Mammary epithelial cell (primary cell): ENCODE measurements at regions of chr1 and their contacts with region 1.

Region 1: GRCh38 chr1:37802439-37802838 is 5.2 kb upstream of the C1orf122 start:
- DNase-seq: no peak
- H3K4me3 ChIP-seq: no peak overlapping the region
- H3K27ac ChIP-seq: no peak overlapping the region
- H3K4me1 ChIP-seq: peaks cover 6% of the 10 kb centered on the region
- H3K27me3 ChIP-seq: no peaks in the 10 kb centered on the region
- CTCF ChIP-seq: no peak

Region 2: GRCh38 chr1:37859507-37860345 is 57.3 kb after region 1 on chr1 and contains the start of gene MTF1:
- CTCF ChIA-PET with region 1: no interaction called
- dilution Hi-C with region 1: loop called (anchors 5 kb)
- in situ Hi-C with region 1: no loop called
- intact Hi-C with region 1: loop called (anchors 1 kb)
- DNase-seq: peak; percentile 97
- H3K4me3 ChIP-seq: peak within 1 kb of the TSS; percentile 69 to 83 (median 78)
- H3K27ac ChIP-seq: peak within 1 kb of the TSS; percentile 89
- H3K4me1 ChIP-seq: peaks cover 29% of the 10 kb centered on the region
- H3K27me3 ChIP-seq: no peaks in the 10 kb centered on the region
- CTCF ChIP-seq: peak; percentile 62 to 93
- total RNA-seq, gene MTF1: 4.5 to 28.7 TPM

Region 3: DNA sequence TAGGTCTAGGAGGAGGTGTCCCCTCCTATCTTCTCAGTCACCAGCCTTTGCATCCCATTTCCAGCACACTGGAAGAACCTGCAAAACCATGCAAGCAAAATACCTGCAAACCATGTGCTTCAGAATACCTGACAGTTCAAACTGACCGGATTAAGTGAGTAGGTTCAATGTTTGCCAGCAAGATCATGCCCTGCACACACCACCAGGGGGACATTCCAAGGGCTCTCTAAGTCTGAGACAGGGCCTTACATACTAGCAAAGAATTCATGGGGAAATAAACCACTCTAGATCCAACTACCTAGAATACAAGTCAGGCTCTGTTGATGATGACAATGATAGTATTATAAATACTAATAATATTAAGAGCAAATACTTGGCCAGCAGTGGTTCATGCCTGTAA is 116.8 kb after region 1 on chr1:
- CTCF ChIA-PET with region 1: no interaction called
- dilution Hi-C with region 1: no loop called
- in situ Hi-C with region 1: no loop called
- intact Hi-C with region 1: no loop called
- DNase-seq: peak; percentile 7
- H3K4me3 ChIP-seq: no peak overlapping the region
- H3K27ac ChIP-seq: no peak overlapping the region
- H3K4me1 ChIP-seq: no peaks in the 10 kb centered on the region
- H3K27me3 ChIP-seq: no peaks in the 10 kb centered on the region
- CTCF ChIP-seq: peak; percentile 47 to 65